Heart left ventricle (tissue), 16 donors: ENCODE measurements at regions of chr12 and their contacts with region 1.

Region 1: DNA sequence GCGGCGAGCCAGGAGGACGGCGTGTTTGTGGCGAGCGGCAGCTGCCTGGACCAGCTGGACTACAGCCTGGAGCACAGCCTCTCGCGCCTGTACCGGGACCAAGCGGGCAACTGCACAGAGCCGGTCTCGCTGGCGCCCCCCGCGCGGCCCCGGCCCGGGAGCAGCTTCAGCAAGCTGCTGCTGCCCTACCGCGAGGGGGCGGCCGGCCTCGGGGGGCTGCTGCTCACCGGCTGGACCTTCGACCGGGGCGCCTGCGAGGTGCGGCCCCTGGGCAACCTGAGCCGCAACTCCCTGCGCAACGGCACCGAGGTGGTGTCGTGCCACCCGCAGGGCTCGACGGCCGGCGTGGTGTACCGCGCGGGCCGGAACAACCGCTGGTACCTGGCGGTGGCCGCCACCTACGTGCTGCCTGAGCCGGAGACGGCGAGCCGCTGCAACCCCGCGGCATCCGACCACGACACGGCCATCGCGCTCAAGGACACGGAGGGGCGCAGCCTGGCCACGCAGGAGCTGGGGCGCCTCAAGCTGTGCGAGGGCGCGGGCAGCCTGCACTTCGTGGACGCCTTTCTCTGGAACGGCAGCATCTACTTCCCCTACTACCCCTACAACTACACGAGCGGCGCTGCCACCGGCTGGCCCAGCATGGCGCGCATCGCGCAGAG is 873 bp downstream of the PLXNC1 start:
- DNase-seq: peak in 4 of 5 donors; percentile 35 to 79 (median 56)
- ATAC-seq: peak in 3 of 4 donors; percentile 29 to 58 (median 50)
- H3K4me3 ChIP-seq: peak overlapping the region; percentile 42 to 80 (median 66)
- H3K27ac ChIP-seq: peak overlapping the region in 3 of 12 donors; percentile 13 to 70 (median 28)
- H3K4me1 ChIP-seq: peaks cover 0 to 51% (median 12%) of the 10 kb centered on the region in 12 donors
- H3K27me3 ChIP-seq: peaks cover 0 to 18% (median 2%) of the 10 kb centered on the region in 9 donors
- CTCF ChIP-seq: peak in 9 of 12 donors; percentile 16 to 51 (median 27)
- POLR2A ChIP-seq: no peak

Region 2: GRCh38 chr12:94289461-94290312 is 140.4 kb after region 1 on chr12:
- intact Hi-C with region 1: loop called in 1 of 10 experiments (anchors 10 kb)
- DNase-seq: peak in 1 of 5 donors; percentile 47
- ATAC-seq: peak; percentile 43 to 77 (median 62)
- H3K4me3 ChIP-seq: peak overlapping the region in 2 of 12 donors; percentile 10 to 20
- H3K27ac ChIP-seq: peak overlapping the region; percentile 22 to 84 (median 66)
- H3K4me1 ChIP-seq: peaks cover 4 to 30% (median 20%) of the 10 kb centered on the region in 12 donors
- H3K27me3 ChIP-seq: no peaks in the 10 kb centered on the region
- CTCF ChIP-seq: no peak
- POLR2A ChIP-seq: no peak

Region 3: DNA sequence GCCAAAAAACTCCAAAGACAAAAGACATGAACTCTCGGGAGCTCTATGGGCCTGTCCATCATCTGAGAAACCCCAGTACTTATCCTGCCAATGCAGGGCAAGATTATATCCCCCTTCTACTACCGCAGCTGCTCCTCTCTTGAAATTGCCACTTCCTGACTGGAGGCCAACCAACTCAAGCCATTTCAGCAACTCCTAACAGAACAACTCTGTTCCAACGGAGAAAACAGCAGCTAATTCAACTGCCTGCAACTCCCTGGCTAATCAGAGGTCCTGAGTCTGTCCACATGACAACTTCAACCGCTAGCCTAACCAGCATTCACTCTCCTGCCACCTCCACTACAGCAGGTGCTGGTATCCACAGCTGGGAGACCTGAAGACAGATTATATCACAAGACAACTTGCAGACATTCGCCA is 286.3 kb after region 1 on chr12:
- intact Hi-C with region 1: loop called in 9 of 10 experiments (anchors 2 to 10 kb)
- DNase-seq: no peak
- ATAC-seq: peak in 3 of 4 donors; percentile 33 to 42 (median 39)
- H3K4me3 ChIP-seq: peak overlapping the region in 2 of 12 donors; percentile 11 to 18
- H3K27ac ChIP-seq: no peak overlapping the region
- H3K4me1 ChIP-seq: peaks cover 0 to 16% (median 6%) of the 10 kb centered on the region in 12 donors
- H3K27me3 ChIP-seq: no peaks in the 10 kb centered on the region
- CTCF ChIP-seq: no peak
- POLR2A ChIP-seq: no peak